ENCODE measurements at regions of chr11 and their contacts with region 1.

Region 1: DNA sequence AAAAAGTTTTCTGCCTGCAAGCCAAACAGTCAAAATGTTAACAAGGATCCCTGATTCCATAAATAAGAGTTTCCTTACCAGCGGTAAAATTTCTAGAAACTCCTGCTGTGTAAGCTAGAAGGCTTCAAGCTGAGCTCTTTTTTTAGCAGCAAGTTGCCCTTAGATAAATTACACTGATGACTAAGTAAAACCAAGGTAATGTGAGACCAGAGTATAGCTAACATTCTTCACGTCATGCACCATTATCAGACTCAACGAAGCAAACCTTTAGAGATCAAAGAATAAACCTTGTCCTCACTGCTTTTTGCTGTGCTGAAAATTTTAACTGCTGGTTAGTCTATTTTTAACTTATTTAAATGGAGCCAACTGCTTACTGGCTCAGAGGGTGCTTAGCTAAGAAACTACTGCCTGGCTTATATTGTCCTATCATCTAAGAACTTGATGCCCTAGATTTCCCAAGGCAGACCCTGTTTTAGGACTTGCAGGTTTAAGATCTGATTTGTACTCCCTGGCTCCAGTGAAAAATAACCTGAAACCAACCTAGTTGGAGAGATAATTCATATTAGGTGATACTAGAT is 900.7 kb downstream of the JRKL start:
- DNase-seq: no peak
- ATAC-seq: peak; percentile 80 to 93 (median 86)
- H3K4me3 ChIP-seq: peak overlapping the region; percentile 43
- H3K27ac ChIP-seq: peak overlapping the region; percentile 48
- H3K4me1 ChIP-seq: no peaks in the 10 kb centered on the region
- H3K27me3 ChIP-seq: no peaks in the 10 kb centered on the region
- CTCF ChIP-seq: no peak

Region 2: DNA sequence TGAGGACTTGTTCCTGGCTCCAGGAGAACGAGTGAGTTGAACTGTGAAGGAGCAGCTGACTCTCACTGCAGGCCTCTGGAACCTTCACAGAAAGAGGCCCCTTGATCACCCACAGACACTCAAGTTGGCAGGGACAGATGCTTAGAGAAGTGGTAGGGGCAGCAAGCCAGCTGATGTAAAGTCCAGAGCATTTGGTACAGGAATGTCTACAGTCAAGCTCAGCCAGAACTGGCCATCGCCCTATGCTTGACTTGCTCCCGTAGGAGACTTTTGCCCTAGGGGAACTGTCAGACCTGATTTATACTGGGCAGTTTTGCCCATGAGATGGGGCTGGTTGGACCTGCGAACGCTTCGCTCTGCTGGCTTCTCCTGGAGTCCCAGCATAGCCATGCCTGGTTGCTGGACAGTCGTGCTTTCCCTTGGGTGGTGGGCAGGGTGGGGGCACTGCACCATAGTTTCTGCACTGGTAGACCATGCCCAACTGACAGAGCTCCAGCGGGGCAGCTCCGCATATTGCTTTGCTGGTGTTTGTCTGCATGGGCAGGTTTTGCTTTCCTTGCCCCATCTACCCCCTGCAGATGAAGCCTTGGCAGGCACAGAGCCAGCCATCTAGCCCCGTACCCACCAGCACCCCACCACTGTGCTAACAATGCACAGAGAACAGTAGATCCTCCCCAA is 77.0 kb after region 1 on chr11:
- intact Hi-C with region 1: loop called in 1 of 2 experiments (anchors 5 kb)
- DNase-seq: no peak
- ATAC-seq: no peak
- H3K4me3 ChIP-seq: no peak overlapping the region
- H3K27ac ChIP-seq: no peak overlapping the region
- H3K4me1 ChIP-seq: no peaks in the 10 kb centered on the region
- H3K27me3 ChIP-seq: no peaks in the 10 kb centered on the region
- CTCF ChIP-seq: no peak

Measured in psoas muscle (tissue), 8 donors.